Dorsolateral prefrontal cortex (tissue), 120 donors: ENCODE measurements at regions of chr13 and their contacts with region 1.

Region 1: GRCh38 chr13:27362064-27362883 is 62.1 kb upstream of the GTF3A start:
- DNase-seq: peak; percentile 81 to 90 (median 86)
- H3K4me3 ChIP-seq: peak overlapping the region; percentile 20 to 77 (median 57)
- H3K27ac ChIP-seq: peak overlapping the region in 1 of 59 donors; percentile 35
- H3K27me3 ChIP-seq: peaks cover 0 to 7% (median 0%) of the 10 kb centered on the region in 45 donors
- CTCF ChIP-seq: peak; percentile 63 to 99 (median 93)

Region 2: DNA sequence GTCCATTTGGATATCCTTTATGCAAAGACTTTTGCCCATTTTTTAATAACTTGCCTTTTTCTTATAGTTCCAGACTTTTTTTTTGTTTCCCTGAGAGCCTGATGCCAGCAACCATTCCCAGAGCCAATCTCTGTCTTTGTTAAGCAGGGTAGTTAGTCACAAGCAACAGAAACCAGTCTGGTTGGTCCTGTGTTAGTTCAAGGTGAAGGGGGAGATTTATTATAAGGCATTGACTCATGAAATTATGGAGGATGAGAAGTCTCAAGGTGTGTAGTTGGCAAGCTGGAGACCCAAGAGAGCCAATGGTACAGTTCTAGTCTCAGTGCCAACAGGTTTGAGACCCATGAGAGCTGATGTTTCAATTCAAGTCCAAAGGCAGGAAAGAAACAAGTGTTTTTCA is 634.6 kb before region 1 on chr13:
- intact Hi-C with region 1: no loop called
- DNase-seq: no peak
- H3K4me3 ChIP-seq: no peak overlapping the region
- H3K27ac ChIP-seq: no peak overlapping the region
- H3K27me3 ChIP-seq: no peaks in the 10 kb centered on the region
- CTCF ChIP-seq: no peak

Region 3: GRCh38 chr13:26946684-26947343 is 415.5 kb before region 1 on chr13:
- intact Hi-C with region 1: loop called in 1 of 2 experiments (anchors 1 kb)
- DNase-seq: no peak
- H3K4me3 ChIP-seq: no peak overlapping the region
- H3K27ac ChIP-seq: no peak overlapping the region
- H3K27me3 ChIP-seq: no peaks in the 10 kb centered on the region
- CTCF ChIP-seq: peak in 55 of 56 donors; percentile 36 to 81 (median 63)

Region 4: DNA sequence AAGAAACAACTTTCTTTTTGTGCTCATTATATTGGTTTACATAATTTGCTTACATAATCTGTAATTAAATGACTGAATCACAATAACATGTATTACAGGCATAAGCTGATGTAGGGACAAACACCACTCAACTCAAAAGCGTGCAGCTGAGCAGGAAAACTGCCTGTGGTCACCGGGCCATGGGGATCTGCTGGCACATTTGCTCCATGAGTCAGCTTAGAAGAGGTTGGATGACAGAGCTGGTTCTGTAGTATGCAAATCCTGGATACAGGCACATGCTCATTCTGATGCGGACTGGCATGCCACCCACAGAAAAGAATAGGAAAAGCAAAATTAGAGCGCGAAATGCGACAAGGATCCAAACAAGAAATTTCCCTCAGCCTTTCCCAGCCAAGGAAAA is 319.3 kb before region 1 on chr13:
- intact Hi-C with region 1: loop called in 1 of 2 experiments (anchors 2 kb)
- DNase-seq: peak; percentile 37 to 88 (median 80)
- H3K4me3 ChIP-seq: peak overlapping the region in 5 of 59 donors; percentile 3 to 25 (median 16)
- H3K27ac ChIP-seq: peak overlapping the region in 47 of 59 donors; percentile 0 to 81 (median 54)
- H3K27me3 ChIP-seq: no peaks in the 10 kb centered on the region
- CTCF ChIP-seq: peak in 50 of 56 donors; percentile 13 to 76 (median 44)

Region 5: DNA sequence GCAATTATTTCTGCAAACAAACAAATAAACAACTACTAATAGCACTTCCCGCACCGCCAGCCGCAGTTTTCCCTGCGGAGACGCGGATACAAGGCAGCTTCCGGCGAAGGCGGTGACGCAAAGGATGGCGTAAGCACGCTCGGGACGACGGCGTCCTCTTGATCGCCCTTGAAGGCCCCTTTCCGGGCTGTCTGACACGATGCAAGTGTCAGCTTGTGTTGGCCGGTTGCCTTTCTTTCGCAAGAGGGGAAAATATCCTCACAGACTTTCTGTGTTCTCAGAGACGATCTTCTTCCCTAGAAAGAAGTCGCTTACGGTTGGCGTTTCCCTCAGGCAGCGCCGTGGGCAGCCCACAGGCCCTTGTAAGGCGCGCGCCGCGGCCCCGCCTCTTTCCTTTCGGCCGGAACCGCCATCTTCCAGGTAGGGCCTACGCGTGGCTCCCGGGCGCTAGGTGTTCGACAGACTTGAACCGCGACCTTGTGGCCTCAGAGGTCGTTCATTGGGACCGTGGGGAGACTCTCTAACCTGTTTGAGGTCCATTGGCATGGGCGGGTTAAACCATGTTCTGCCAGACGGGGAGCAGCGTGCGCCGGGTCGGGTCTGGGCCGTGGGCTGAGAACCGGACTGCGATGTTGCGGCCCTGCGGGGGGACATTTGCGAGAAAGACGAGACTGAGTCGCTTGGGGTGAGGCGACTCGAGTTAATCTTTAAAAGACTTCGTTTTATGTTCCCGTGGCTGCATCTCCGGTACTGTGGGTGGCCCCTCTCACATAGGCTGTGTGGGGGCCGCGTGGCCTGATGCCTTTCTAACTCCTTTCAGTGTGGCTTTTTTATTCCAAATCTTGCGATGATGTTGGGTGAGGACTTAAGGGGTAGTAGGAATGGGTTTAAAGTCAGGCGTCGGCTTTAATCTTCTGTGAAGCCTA is 110.8 kb before region 1 on chr13 and contains the start of gene RPL21:
- intact Hi-C with region 1: loop called in 1 of 2 experiments (anchors 5 kb)
- DNase-seq: peak; percentile 89 to 97 (median 96)
- H3K4me3 ChIP-seq: peak within 1 kb of the TSS; percentile 69 to 100 (median 94)
- H3K27ac ChIP-seq: peak within 1 kb of the TSS; percentile 85 to 100 (median 98)
- H3K27me3 ChIP-seq: no peaks in the 10 kb centered on the region
- CTCF ChIP-seq: peak in 22 of 56 donors; percentile 5 to 47 (median 23)
- total RNA-seq, gene RPL21: 253 to 573 (median 415) TPM

Region 6: GRCh38 chr13:27293873-27294515 is 68.3 kb before region 1 on chr13:
- intact Hi-C with region 1: loop called in 1 of 2 experiments (anchors 5 kb)
- DNase-seq: no peak
- H3K4me3 ChIP-seq: no peak overlapping the region
- H3K27ac ChIP-seq: peak overlapping the region in 2 of 59 donors; percentile 10 to 93
- H3K27me3 ChIP-seq: no peaks in the 10 kb centered on the region
- CTCF ChIP-seq: no peak

Region 7: DNA sequence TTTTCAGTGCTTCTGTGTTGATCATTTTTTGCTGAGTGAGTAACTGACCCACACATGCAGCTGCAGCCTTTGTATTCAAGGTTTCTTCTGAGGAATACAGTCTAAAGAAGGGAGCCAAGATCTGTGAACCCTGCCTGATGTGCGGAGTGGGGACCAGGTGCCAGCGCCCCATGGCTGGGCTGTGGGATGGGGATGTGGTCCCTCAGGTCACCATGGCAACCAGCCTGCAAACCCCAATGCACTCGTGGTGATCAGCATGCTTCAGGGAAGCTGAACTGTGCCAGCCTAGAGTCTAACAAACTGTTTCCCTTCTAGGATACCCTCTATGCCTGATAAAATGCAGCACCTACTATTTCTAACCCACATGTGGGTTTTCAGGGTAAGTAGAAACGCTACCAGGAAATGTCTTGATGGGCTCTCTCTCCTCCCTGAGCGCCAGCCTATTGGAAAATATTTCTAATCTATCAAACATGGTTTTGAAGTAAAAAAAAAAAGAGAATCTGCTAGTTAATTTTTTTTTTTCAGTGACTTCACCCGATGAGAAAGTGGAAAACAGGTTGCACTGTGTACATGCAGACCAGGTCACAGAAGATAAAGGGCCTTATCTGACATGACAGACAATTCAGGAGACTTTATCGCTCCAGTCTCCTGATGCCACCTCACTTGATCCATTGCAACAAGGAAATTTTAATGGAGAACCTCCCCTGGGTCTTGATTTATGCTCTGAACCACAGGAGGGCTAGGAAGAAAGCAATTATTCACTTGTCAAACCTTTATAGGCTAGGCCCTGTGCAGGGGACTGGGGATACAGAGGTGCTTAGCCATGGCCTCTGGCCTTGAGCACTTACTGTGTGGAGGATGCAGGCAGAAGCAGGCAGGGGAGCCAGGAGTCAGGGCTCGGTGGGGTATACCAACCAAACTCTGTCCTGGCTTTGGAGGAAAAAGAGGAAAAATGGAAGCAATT is 40.5 kb before region 1 on chr13:
- intact Hi-C with region 1: no loop called
- DNase-seq: no peak
- H3K4me3 ChIP-seq: no peak overlapping the region
- H3K27ac ChIP-seq: no peak overlapping the region
- H3K27me3 ChIP-seq: peaks cover 0 to 4% (median 0%) of the 10 kb centered on the region in 45 donors
- CTCF ChIP-seq: no peak

Region 8: DNA sequence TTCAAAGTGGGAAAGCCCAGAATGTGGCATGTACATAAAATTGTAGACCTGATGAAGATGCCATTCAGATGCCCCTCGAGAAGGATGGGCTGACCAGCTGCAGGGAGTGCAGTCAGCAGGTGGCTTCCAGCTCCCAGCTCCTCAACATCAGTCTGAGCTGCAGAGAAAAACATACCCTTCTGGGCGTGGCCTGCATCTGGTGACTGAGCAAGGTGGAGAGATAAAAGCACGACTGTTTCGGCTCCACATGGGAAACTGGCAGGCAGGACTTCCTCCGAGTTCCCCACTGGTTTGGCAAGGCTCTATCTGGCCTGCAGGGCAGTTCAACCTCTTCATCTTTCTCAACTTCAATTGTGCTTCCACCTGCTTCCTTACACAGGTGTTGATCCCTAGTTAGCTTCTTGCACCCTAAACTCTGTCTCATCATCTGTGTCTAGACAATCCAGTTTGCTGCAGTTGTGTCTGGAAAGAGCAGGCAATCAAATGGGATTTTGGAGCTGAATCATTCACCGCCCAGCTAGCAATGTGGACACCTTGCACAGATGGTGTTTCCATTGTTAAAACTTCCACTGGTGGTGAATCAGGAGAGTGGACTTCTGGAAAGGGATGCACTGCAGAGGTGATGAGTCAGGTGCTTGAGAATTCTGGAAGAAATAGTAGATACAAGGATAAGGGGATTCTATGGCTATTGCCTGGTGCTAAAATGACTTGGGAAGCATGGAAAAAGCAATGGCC is 316.2 kb after region 1 on chr13:
- intact Hi-C with region 1: no loop called
- DNase-seq: no peak
- H3K4me3 ChIP-seq: no peak overlapping the region
- H3K27ac ChIP-seq: no peak overlapping the region
- H3K27me3 ChIP-seq: peaks cover 0 to 9% (median 0%) of the 10 kb centered on the region in 45 donors
- CTCF ChIP-seq: no peak

Region 9: DNA sequence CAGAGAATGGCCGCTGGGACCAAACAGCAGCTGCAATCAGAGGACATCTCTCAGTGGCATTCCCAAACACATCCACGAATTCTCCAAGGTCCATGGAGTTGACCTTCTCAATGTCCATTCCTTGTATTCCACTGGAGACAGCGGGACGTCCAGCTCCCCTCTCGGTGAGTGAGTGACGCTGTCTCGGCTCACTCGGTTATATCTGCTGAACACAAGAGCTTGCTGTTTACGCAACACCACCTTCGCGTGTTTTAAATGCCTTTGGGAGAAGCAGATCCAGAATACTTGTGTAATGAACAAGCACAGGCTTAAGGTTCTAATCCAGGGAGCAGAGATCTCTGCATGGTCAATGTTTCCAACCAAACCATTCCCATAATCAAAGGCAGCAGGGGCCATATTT is 626.2 kb after region 1 on chr13 and contains the start of gene URAD:
- intact Hi-C with region 1: loop called (anchors 2 to 5 kb)
- DNase-seq: no peak
- H3K4me3 ChIP-seq: no peak within 1 kb of the TSS
- H3K27ac ChIP-seq: no peak within 1 kb of the TSS
- H3K27me3 ChIP-seq: peaks cover 0 to 46% (median 16%) of the 10 kb centered on the region in 45 donors
- CTCF ChIP-seq: no peak
- total RNA-seq, gene URAD: 0.52 to 0.68 TPM in 2 of 120 experiments, not detected in the others